ENCODE measurements at regions of chr4 and their contacts with region 1.

Region 1: DNA sequence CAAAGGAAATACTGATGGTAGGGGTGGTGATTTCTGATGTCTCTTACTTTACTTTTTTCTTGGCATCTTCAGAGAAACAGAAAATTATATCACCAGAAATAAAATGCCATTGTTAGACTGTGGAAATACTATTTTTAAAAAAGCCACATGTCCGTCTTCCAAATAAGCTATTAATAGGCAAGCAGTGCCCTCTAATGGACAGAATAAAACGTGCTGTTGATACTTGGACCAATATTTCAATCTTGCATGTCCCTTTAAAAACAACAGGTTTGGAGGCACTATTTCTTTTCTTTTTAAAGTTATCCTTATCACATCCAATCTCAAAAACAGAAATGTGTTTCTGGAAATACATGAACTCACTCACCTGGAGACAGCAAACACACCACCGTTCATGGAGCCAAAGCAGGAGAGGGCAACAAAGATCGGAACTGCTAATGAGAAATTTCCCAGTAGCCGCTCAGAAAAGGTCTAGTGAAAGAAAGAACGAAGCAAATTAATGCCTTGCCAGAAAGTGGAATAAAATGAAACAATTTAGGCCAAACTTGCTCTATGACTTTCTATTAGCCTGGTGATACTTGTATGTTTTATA is 59.2 kb downstream of the SLC7A11 start:
- DNase-seq: no peak
- ATAC-seq: peak; percentile 46 to 88 (median 84)
- H3K4me3 ChIP-seq: no peak overlapping the region
- H3K27ac ChIP-seq: no peak overlapping the region
- H3K4me1 ChIP-seq: no peaks in the 10 kb centered on the region
- H3K27me3 ChIP-seq: no peaks in the 10 kb centered on the region
- CTCF ChIP-seq: peak; percentile 39 to 45 (median 42)

Region 2: DNA sequence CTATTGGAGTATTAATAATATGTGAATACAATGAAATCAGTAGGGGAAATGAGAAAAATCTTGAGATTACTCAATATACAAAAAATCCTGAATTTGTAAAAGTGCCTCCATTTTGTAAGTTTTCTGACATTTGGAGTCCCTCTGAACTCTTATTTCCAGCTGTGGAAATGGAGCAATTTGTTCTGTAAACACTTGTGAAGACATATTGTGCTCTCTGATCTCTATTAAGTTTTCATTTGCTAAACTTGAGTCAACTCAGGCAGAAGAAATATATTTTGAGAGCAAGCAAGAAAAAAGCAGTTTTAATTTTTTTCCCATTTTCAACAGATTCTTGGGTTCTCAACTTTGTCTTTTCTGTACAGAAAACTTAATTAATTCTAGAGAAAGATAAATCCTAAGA is 599.3 kb before region 1 on chr4:
- intact Hi-C with region 1: no loop called
- DNase-seq: no peak
- ATAC-seq: no peak
- H3K4me3 ChIP-seq: no peak overlapping the region
- H3K27ac ChIP-seq: no peak overlapping the region
- H3K4me1 ChIP-seq: no peaks in the 10 kb centered on the region
- H3K27me3 ChIP-seq: no peaks in the 10 kb centered on the region
- CTCF ChIP-seq: no peak

Region 3: GRCh38 chr4:138035781-138036258 is 147.1 kb before region 1 on chr4:
- intact Hi-C with region 1: loop called in 2 of 3 experiments (anchors 10 kb)
- DNase-seq: no peak
- ATAC-seq: peak; percentile 50 to 91 (median 90)
- H3K4me3 ChIP-seq: no peak overlapping the region
- H3K27ac ChIP-seq: no peak overlapping the region
- H3K4me1 ChIP-seq: no peaks in the 10 kb centered on the region
- H3K27me3 ChIP-seq: no peaks in the 10 kb centered on the region
- CTCF ChIP-seq: peak in 2 of 4 donors; percentile 33 to 34

Measured in pancreas (tissue), 10 donors.